ENCODE measurements at regions of chr17 and their contacts with region 1.

Region 1: GRCh38 chr17:66727639-66728570 is 107.0 kb upstream of the CACNG5 start:
- DNase-seq: peak; percentile 69
- ATAC-seq: peak; percentile 77
- H3K4me3 ChIP-seq: no peak overlapping the region
- H3K27ac ChIP-seq: no peak overlapping the region
- H3K4me1 ChIP-seq: peaks cover 9% of the 10 kb centered on the region
- H3K27me3 ChIP-seq: no peaks in the 10 kb centered on the region
- CTCF ChIP-seq: peak; percentile 90

Region 2: DNA sequence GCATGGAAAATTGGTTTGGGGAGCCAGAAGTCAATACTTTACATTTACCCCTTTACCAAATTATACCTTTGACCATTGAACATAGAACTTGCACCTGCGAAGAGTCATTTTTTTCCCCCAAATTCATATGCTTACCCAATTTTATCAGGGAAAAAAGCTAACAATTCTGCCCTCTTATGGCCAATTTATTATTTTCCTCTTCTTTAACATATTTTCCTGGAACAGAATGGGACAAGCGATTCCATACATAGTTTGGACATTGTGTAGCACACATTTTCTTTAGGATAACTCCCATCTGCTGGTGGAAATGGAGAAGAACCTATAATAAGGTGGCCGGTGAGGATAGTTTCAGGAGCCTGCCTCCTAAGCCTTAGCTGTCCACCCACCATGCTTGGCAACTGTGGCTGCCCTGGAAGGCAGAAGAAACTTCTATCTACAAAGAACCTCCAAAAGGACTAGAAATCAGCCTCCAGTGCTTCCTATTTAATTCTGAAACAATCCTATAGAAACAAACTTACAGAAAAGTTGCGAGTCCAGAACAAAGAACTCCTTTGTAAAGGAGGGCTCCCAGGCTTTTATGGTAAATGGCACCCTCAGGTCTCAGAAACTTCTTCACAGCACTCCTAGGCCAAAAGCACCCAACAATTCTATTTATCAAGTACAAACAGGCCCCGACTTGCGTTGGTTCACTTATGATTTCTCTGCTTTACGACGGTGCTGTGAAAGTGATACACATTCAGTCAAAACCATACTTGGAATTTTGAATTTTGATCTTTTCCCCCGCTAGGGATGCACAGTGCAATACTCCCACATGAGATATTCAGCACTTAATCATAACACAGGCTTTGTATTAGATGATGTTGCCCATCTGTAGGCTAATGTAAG is 172.5 kb after region 1 on chr17:
- CTCF ChIA-PET with region 1: interaction called, 12 read pairs
- POLR2A ChIA-PET with region 1: no interaction called
- intact Hi-C with region 1: loop called (anchors 1 kb)
- DNase-seq: peak; percentile 72
- ATAC-seq: peak; percentile 77
- H3K4me3 ChIP-seq: no peak overlapping the region
- H3K27ac ChIP-seq: no peak overlapping the region
- H3K4me1 ChIP-seq: peaks cover 9% of the 10 kb centered on the region
- H3K27me3 ChIP-seq: no peaks in the 10 kb centered on the region; the same call in 1 of the 2 replicates
- CTCF ChIP-seq: peak; percentile 84

Region 3: DNA sequence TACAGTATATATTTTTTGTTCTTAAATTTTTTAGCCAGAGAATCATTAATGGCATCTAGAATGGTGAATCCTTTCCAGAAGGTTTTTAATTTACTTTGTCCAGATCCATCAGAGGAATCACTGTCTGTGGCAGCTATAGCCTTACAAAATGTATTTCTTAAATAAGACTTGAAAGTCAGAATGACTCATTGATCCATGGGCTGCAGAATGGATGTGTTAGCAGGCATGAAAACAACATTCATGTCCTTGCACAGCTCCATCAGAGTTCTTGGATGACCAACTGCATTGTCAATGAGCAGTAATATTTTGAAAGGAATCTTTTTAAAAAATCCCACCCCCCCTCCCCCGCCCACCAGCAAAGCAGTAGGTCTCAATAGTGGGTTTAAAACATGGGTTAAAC is 367.9 kb after region 1 on chr17:
- CTCF ChIA-PET with region 1: no interaction called
- POLR2A ChIA-PET with region 1: no interaction called
- intact Hi-C with region 1: loop called (anchors 10 kb)
- DNase-seq: peak; percentile 11
- ATAC-seq: no peak
- H3K4me3 ChIP-seq: no peak overlapping the region
- H3K27ac ChIP-seq: no peak overlapping the region
- H3K4me1 ChIP-seq: no peaks in the 10 kb centered on the region
- H3K27me3 ChIP-seq: no peaks in the 10 kb centered on the region
- CTCF ChIP-seq: no peak

Measured in PC-3 (cell line).